BJ (cell line): ENCODE measurements at regions of chr11 and their contacts with region 1.

Region 1: DNA sequence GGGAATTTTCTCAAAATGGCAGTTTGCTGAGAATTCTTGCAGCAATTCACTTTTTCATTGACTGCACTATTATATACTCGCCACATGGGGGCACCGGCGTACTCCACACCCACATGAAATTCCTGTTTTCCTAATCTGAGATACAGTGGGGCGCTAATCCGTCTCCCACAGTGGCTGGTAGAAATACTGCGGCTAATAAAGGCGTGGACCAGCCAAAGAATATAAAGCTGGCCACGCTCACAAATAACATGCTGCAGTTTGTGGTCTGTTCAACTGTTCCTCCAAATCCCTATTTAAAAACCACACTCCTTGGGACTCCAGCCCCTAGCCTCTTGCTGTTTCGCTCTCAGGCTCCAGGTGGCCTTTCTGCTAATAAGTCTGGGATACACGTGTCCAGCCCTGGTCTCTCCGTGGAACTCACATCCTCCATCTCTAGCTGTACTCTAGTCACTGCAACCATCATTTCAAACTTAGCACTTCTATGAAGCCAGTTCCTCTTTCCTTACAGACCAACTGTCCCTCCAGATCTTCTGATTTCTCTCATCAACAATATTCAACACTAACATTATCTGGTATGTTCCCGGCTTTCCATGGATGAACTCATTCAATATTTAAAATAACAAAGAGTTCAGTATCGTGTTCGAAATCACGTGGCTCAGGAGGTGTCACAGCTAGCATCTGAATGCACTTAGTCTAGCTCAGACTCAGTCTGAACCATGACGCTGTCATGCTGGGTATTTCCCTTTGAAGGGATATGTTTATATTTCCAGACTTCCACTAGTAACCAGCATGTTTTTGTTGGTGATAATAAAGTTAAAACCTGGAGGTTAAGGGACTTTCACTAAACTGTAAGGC is 22.0 kb downstream of the TBRG1 start:
- DNase-seq: no peak
- H3K4me3 ChIP-seq: no peak overlapping the region
- H3K27me3 ChIP-seq: no peaks in the 10 kb centered on the region
- CTCF ChIP-seq: peak; percentile 82

Region 2: GRCh38 chr11:124207102-124207792 is 437.4 kb before region 1 on chr11:
- CTCF ChIA-PET with region 1: no interaction called
- POLR2A ChIA-PET with region 1: no interaction called
- DNase-seq: no peak
- H3K4me3 ChIP-seq: no peak overlapping the region
- H3K27me3 ChIP-seq: no peaks in the 10 kb centered on the region
- CTCF ChIP-seq: no peak

Region 3: GRCh38 chr11:124394408-124394807 is 250.2 kb before region 1 on chr11:
- CTCF ChIA-PET with region 1: no interaction called
- POLR2A ChIA-PET with region 1: no interaction called
- DNase-seq: no peak
- H3K4me3 ChIP-seq: no peak overlapping the region
- H3K27me3 ChIP-seq: no peaks in the 10 kb centered on the region
- CTCF ChIP-seq: no peak

Region 4: DNA sequence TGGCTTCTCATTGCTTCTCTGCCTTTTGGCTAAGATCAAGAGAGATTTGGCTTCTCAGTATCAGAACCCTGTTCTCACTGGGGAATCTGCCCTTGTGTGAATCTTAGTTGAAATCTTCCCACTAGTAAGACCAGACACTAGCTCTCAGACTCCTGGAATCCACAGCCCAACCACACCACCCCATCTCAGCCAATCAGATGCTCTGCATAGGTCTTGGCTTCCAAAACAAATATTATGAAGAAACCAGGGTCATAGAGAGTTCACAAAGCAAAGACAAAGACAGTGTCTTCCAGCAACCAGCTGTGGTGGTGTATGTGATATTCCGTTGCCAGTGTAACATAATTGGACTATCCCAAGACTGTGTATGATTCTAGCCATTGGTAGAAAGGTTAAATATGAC is 106.6 kb before region 1 on chr11:
- CTCF ChIA-PET with region 1: no interaction called
- POLR2A ChIA-PET with region 1: no interaction called
- DNase-seq: no peak
- H3K4me3 ChIP-seq: no peak overlapping the region
- H3K27me3 ChIP-seq: no peaks in the 10 kb centered on the region
- CTCF ChIP-seq: no peak

Region 5: DNA sequence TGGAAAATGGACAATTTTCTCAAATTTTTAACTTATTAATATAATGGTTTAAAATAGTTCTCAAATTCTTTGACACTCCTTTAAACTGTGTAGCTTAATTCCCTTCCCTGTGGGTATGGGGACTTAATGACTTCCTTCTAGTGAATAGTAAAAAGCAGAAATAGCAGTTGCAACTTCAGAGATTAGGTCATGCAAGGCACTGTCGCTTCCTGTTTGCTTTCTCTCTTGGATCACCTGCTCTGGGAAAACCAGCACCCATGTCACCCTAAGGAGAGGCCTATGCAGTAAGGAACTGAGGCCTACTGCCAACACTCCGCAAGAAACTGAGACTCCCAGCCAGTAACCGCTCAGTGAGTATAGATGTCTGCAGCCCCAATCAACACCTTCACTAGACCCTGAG is 38.9 kb before region 1 on chr11:
- CTCF ChIA-PET with region 1: no interaction called
- POLR2A ChIA-PET with region 1: no interaction called
- DNase-seq: no peak
- H3K4me3 ChIP-seq: no peak overlapping the region
- H3K27me3 ChIP-seq: no peaks in the 10 kb centered on the region
- CTCF ChIP-seq: no peak

Region 6: GRCh38 chr11:124633355-124633754 is 11.3 kb before region 1 on chr11:
- CTCF ChIA-PET with region 1: interaction called, 18 read pairs
- POLR2A ChIA-PET with region 1: no interaction called
- DNase-seq: no peak
- H3K4me3 ChIP-seq: no peak overlapping the region
- H3K27me3 ChIP-seq: no peaks in the 10 kb centered on the region
- CTCF ChIP-seq: peak; percentile 43

Region 7: GRCh38 chr11:124656774-124657630 is 12.3 kb after region 1 on chr11:
- CTCF ChIA-PET with region 1: interaction called, 22 read pairs
- POLR2A ChIA-PET with region 1: interaction called, 14 read pairs
- DNase-seq: no peak
- H3K4me3 ChIP-seq: no peak overlapping the region
- H3K27me3 ChIP-seq: no peaks in the 10 kb centered on the region; the same call in 1 of the 2 replicates
- CTCF ChIP-seq: no peak

Region 8: DNA sequence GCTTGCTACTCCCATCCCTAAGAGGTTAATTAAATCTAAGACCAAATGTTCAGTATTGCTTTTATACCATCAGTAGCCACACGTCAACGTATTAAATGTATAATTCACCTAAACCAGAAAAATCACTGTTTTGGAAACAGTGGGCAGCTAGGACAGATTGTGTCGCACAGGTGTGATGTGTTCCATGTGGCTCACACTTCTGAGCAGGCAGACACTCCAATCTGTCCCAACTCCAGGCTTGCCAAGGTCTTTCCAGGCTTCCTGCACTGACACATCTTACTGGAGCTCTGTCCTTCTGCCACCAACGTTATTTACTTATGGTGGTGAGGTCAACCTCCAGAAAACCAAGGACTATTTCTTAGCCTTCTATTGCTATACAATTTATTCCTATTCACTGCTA is 17.5 kb after region 1 on chr11:
- CTCF ChIA-PET with region 1: interaction called, 22 read pairs
- POLR2A ChIA-PET with region 1: interaction called, 14 read pairs
- DNase-seq: no peak
- H3K4me3 ChIP-seq: no peak overlapping the region
- H3K27me3 ChIP-seq: no peaks in the 10 kb centered on the region
- CTCF ChIP-seq: no peak